ENCODE measurements at regions of chr2 and their contacts with region 1.

Region 1: GRCh38 chr2:109144721-109145120 is 15.7 kb downstream of the SH3RF3 start:
- DNase-seq: no peak
- ATAC-seq: no peak
- H3K4me3 ChIP-seq: no peak overlapping the region
- H3K27ac ChIP-seq: no peak overlapping the region
- H3K4me1 ChIP-seq: peaks cover 18% of the 10 kb centered on the region
- H3K27me3 ChIP-seq: no peaks in the 10 kb centered on the region
- CTCF ChIP-seq: no peak
- POLR2A ChIP-seq: no peak
- RAD21 ChIP-seq: no peak

Region 2: GRCh38 chr2:109102588-109103233 is 42.0 kb before region 1 on chr2:
- CTCF ChIA-PET with region 1: no interaction called
- POLR2A ChIA-PET with region 1: no interaction called
- dilution Hi-C with region 1: no loop called
- in situ Hi-C with region 1: no loop called
- intact Hi-C with region 1: no loop called
- DNase-seq: no peak
- ATAC-seq: no peak
- H3K4me3 ChIP-seq: no peak overlapping the region
- H3K27ac ChIP-seq: no peak overlapping the region
- H3K4me1 ChIP-seq: no peaks in the 10 kb centered on the region
- H3K27me3 ChIP-seq: peaks cover 37% of the 10 kb centered on the region
- CTCF ChIP-seq: no peak
- POLR2A ChIP-seq: no peak
- RAD21 ChIP-seq: no peak

Region 3: GRCh38 chr2:109185821-109186570 is 41.3 kb after region 1 on chr2:
- CTCF ChIA-PET with region 1: no interaction called
- POLR2A ChIA-PET with region 1: no interaction called
- dilution Hi-C with region 1: no loop called
- in situ Hi-C with region 1: no loop called
- intact Hi-C with region 1: loop called (anchors 1 kb)
- DNase-seq: peak; percentile 85
- ATAC-seq: peak; percentile 75
- H3K4me3 ChIP-seq: no peak overlapping the region
- H3K27ac ChIP-seq: peak overlapping the region; percentile 89
- H3K4me1 ChIP-seq: peaks cover 27% of the 10 kb centered on the region
- H3K27me3 ChIP-seq: no peaks in the 10 kb centered on the region
- CTCF ChIP-seq: 0 out of 2 replicates have a peak, but pooled peaks have one; percentile 2
- POLR2A ChIP-seq: no peak; the same call in 1 of the 2 replicates
- RAD21 ChIP-seq: no peak